H1 (cell line): ENCODE measurements at regions of chr6 and their contacts with region 1.

Region 1: GRCh38 chr6:139250296-139251044 is 41.3 kb downstream of the TXLNB start:
- DNase-seq: peak; percentile 56 to 78
- H3K4me3 ChIP-seq: no peak overlapping the region
- H3K27ac ChIP-seq: no peak overlapping the region
- H3K4me1 ChIP-seq: no peaks in the 10 kb centered on the region
- H3K27me3 ChIP-seq: no peaks in the 10 kb centered on the region
- CTCF ChIP-seq: peak; percentile 73 to 96 (median 87)
- EP300 ChIP-seq: no peak
- POLR2A ChIP-seq: no peak
- RAD21 ChIP-seq: peak; percentile 60 to 75

Region 2: DNA sequence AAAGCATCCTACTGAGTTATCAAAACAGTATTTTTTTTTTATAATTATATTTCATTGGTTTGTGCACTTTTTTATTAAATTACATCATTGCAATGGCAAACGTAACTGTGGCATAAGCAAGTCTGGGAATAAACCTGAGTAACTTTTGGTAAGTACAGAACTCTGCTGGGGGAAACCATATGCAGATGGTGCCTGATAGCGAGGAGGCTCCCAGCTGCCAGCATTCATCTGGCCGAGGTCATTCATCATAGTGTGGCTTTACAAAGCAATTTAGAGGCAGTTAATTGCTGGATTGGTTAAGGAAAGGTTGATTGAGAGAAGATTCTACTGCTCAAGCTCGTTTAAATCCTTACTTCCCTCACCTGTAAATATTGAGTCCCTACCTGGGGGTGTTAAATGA is 63.0 kb before region 1 on chr6:
- CTCF ChIA-PET with region 1: no interaction called
- POLR2A ChIA-PET with region 1: no interaction called
- DNase-seq: no peak
- H3K4me3 ChIP-seq: no peak overlapping the region
- H3K27ac ChIP-seq: no peak overlapping the region
- H3K4me1 ChIP-seq: peaks cover 0 to 3% (median 0%) of the 10 kb centered on the region in 4 experiments; a peak in 1 of 7 replicates
- H3K27me3 ChIP-seq: no peaks in the 10 kb centered on the region
- CTCF ChIP-seq: no peak
- EP300 ChIP-seq: no peak
- POLR2A ChIP-seq: no peak
- RAD21 ChIP-seq: no peak

Region 3: DNA sequence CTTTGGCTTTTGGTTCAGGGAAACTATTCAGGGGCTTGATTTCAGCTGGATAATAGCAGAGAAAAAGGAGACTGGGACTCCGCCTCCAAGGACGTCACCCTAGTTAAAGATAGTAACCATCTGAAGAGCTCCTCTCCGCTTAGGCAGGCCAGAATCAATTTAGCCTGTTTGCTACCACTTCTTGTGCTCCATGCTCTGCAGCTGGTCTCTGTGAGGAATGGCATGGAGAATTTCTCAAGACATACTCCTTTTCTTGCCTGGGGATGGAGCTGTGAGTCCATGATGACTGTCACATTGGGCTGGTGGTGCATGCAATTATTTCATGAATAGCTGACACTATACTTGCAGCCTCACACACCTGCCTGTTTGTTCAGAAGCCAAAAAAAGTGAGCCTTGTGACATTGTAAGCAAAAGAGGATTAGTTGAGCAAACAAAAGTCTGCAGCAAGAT is 20.1 kb before region 1 on chr6:
- CTCF ChIA-PET with region 1: interaction called, 12 read pairs
- POLR2A ChIA-PET with region 1: no interaction called
- DNase-seq: no peak
- H3K4me3 ChIP-seq: no peak overlapping the region
- H3K27ac ChIP-seq: no peak overlapping the region
- H3K4me1 ChIP-seq: peaks cover 0 to 7% (median 0%) of the 10 kb centered on the region in 4 experiments; a peak in 2 of 7 replicates
- H3K27me3 ChIP-seq: no peaks in the 10 kb centered on the region
- CTCF ChIP-seq: peak; percentile 9 to 41 (median 21); a peak in 3 of 4 replicates
- EP300 ChIP-seq: no peak
- POLR2A ChIP-seq: no peak
- RAD21 ChIP-seq: peak; percentile 63 to 75

Region 4: DNA sequence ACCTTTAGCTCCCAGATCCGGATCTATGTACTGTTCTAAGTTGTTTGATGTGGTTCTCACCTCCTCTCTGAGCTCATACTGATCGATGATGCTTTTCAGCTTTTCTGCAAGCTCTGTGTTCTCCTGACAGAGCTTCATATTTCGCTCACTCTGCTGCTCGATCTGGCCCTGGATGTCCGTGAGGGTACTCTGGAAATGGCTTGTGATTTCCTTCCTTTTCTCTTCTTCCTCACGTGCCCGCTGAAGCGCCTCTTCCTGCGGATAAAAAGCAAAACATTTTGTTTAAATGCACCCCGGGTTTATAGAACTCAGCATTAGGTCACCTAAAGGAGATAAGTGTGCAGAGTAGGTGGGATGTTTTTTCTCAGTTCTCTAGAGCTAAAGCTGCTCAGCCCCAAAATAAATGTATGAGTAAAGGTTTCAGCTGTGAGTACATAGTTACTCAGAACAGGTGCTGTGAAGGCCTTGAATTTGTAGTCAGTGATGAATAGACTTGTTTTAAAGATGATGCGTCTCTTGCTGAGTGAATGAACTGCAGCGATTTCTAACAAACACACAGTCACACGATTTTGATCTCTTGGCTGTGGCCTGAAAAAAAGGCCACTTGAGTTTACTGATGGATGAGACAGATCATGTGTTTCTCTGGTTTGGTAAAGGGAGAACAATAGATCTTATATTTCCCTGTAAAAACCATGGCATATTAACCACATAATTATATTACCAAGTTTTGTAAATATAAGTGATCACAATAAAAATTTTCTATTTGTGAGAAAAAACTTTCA is 12.2 kb after region 1 on chr6:
- CTCF ChIA-PET with region 1: interaction called, 28 read pairs
- POLR2A ChIA-PET with region 1: no interaction called
- DNase-seq: no peak
- H3K4me3 ChIP-seq: no peak overlapping the region
- H3K27ac ChIP-seq: no peak overlapping the region
- H3K4me1 ChIP-seq: peaks cover 0 to 2% (median 0%) of the 10 kb centered on the region in 4 experiments; a peak in 1 of 7 replicates
- H3K27me3 ChIP-seq: no peaks in the 10 kb centered on the region
- CTCF ChIP-seq: no peak
- EP300 ChIP-seq: no peak
- POLR2A ChIP-seq: no peak
- RAD21 ChIP-seq: no peak

Region 5: DNA sequence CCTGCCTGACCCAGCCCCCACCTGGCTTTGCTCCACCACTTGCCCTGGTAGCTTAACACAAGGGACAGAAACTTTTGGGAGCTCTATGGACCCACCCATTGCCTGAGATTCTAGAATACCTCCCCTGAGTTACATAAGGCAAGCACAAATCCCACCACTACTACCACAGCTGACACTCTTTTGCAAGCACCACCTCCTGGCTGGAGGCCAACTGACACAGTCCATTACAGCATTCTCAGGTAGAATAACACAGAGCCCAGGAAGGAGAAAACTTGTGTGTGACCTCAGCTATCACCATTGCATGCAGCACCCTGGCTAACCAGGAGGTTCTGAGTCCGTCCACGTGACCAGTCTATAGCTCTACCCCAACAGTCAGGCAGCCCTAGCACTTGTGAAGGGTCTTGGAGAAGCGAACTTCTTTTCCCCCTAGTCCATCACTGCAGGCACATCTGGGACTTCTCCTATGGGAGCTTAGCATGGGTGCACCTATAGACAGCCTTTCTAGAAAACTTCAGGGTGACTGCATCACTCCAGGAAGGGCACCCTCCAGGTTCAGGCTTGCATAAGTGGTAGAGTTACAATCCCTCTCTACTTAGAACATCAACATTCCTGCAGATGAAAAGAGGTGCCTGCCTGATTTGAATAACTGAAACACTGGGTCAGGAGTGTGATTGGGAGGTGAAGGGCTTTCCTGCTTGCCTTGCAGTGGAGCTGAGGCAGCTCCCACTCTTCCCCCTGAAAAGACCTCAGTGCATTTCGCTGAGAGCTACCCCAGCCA is 93.9 kb after region 1 on chr6:
- CTCF ChIA-PET with region 1: interaction called, 10 read pairs
- POLR2A ChIA-PET with region 1: no interaction called
- DNase-seq: no peak
- H3K4me3 ChIP-seq: no peak overlapping the region
- H3K27ac ChIP-seq: no peak overlapping the region
- H3K4me1 ChIP-seq: peaks cover 2 to 8% (median 6%) of the 10 kb centered on the region in 4 experiments; a peak in 5 of 7 replicates
- H3K27me3 ChIP-seq: no peaks in the 10 kb centered on the region
- CTCF ChIP-seq: no peak
- EP300 ChIP-seq: no peak
- POLR2A ChIP-seq: no peak
- RAD21 ChIP-seq: no peak